ENCODE measurements at regions of chr20 and their contacts with region 1.

Region 1: DNA sequence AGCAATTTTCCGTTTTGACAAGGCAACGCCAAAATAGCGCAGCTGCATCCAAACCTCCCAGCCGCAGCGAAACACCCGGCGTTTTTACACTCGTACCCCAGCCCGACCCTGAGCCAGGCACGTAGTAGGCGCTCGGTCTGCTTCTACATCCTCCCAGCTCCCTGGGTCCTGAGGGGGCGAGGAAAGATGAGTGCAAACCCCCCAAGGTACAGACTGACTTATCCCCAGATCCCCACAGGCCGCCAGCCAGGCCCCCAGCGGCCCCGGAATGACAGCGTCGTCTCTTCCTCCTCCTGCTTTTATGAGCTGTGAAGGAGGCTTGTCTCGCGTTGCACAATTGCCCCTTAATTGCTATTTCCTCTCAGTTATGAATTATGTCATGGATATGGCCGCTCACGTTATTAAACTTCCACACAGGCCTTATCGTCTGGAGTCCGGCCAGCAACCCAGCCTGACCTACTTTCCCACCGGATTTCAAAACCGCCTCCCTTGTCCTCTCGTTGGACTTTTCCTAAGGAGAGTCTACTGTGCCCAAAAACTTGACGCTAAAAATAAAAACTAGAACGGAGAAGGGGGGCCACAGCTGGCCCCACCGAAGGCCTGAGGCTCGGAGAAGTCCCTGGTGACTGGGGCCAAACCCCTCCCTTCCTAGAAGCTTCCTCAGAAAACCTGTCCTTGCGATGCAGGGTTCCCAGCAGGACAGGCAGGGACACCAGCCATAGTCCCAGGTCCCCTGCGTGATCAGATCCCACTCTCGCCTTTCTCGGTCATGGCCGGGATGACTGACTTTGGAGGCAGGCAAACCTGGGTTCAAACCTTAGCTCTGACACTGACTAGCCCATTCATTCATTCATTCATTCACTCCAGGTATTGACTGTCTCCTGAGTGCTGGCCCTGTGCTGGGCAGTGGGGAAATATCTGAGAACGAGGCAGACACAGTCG is 130.9 kb upstream of the PTPN1 start:
- DNase-seq: peak; percentile 98
- H3K4me3 ChIP-seq: peak overlapping the region in 2 of 4 donors; percentile 17 to 21
- H3K27ac ChIP-seq: peak overlapping the region; percentile 75 to 83 (median 78)
- H3K4me1 ChIP-seq: peaks cover 0 to 54% (median 49%) of the 10 kb centered on the region in 4 donors
- H3K27me3 ChIP-seq: no peaks in the 10 kb centered on the region
- CTCF ChIP-seq: no peak
- EP300 ChIP-seq: peak in 3 of 4 donors; percentile 9 to 75 (median 63)
- POLR2A ChIP-seq: peak; percentile 60 to 71

Region 2: GRCh38 chr20:50320910-50321796 is 58.2 kb before region 1 on chr20:
- intact Hi-C with region 1: loop called (anchors 5 kb)
- DNase-seq: peak; percentile 98
- H3K4me3 ChIP-seq: peak overlapping the region; percentile 13 to 48 (median 36)
- H3K27ac ChIP-seq: peak overlapping the region; percentile 77 to 92 (median 84)
- H3K4me1 ChIP-seq: peaks cover 0 to 25% (median 21%) of the 10 kb centered on the region in 4 donors
- H3K27me3 ChIP-seq: no peaks in the 10 kb centered on the region
- CTCF ChIP-seq: no peak
- EP300 ChIP-seq: peak in 1 of 4 donors; percentile 59
- POLR2A ChIP-seq: peak; percentile 33 to 76

Region 3: DNA sequence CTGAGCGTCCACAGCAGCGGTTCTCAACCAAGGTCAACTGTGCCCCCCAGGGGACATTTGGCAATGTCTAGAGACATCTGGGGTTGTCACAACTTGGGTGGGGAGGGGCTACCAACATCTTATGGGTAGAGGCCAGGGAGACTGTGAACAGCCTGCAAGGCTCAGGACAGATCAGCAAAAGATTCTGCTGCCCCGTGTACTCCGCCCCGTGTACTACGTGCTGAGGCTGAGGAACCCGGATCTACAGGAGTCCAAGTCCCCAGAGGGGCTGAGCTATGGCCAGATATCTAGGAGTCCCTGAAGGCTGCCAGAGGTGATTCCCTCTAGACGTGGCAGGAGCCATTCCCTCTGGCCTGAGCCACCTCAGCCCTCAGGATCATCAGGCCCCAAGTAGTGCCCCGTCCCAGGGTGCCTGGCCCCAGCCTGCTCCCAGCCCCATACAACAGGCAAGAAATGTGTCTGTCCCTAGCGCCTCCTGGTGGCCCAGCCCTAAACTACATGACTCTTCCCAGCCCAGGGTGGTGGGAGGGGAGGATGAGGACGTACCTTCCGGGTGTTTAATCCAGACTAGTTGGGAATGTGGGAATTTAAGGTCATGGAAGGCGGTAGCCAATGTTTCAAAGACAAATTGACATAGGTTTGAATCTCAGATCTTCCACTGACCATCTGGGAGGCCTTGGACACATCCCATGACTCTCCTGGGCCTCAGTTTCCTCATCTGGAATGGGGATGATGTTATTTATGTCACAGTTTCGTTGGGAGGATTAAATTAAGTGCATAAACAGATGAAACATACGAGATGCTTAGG is 81.3 kb after region 1 on chr20:
- intact Hi-C with region 1: loop called (anchors 2 kb)
- DNase-seq: peak; percentile 95
- H3K4me3 ChIP-seq: no peak overlapping the region
- H3K27ac ChIP-seq: peak overlapping the region; percentile 35 to 70 (median 43)
- H3K4me1 ChIP-seq: peaks cover 0 to 22% (median 14%) of the 10 kb centered on the region in 4 donors
- H3K27me3 ChIP-seq: no peaks in the 10 kb centered on the region
- CTCF ChIP-seq: peak; percentile 90 to 98 (median 97)
- EP300 ChIP-seq: no peak
- POLR2A ChIP-seq: no peak